ENCODE measurements at regions of chr11 and their contacts with region 1.

Region 1: GRCh38 chr11:18395735-18396504 is 1.6 kb downstream of the LDHA start:
- DNase-seq: peak; percentile 97
- ATAC-seq: peak; percentile 86
- H3K4me3 Mint-ChIP-seq: peak overlapping the region; percentile 98
- H3K27ac Mint-ChIP-seq: peak overlapping the region; percentile 96
- H3K4me1 Mint-ChIP-seq: peaks cover 25% of the 10 kb centered on the region
- H3K27me3 Mint-ChIP-seq: peaks cover 9% of the 10 kb centered on the region
- CTCF ChIP-seq: no peak

Region 2: GRCh38 chr11:18408558-18409242 is 12.8 kb after region 1 on chr11:
- CTCF ChIA-PET with region 1: interaction called, 22 read pairs
- POLR2A ChIA-PET with region 1: interaction called, 8 read pairs
- DNase-seq: no peak
- ATAC-seq: no peak
- H3K4me3 Mint-ChIP-seq: no peak overlapping the region
- H3K27ac Mint-ChIP-seq: peak overlapping the region; percentile 57; the same call in 1 of the 2 replicates
- H3K4me1 Mint-ChIP-seq: peaks cover 8% of the 10 kb centered on the region
- H3K27me3 Mint-ChIP-seq: peaks cover 26% of the 10 kb centered on the region
- CTCF ChIP-seq: no peak

Region 3: GRCh38 chr11:18526521-18527296 is 130.8 kb after region 1 on chr11 and contains the start of gene TSG101:
- CTCF ChIA-PET with region 1: interaction called, 3 read pairs
- POLR2A ChIA-PET with region 1: interaction called, 14 read pairs
- DNase-seq: peak; percentile 93
- ATAC-seq: peak; percentile 94
- H3K4me3 Mint-ChIP-seq: peak within 1 kb of the TSS; percentile 100
- H3K27ac Mint-ChIP-seq: peak within 1 kb of the TSS; percentile 100
- H3K4me1 Mint-ChIP-seq: peaks cover 6% of the 10 kb centered on the region
- H3K27me3 Mint-ChIP-seq: no peaks in the 10 kb centered on the region; the same call in 1 of the 2 replicates
- CTCF ChIP-seq: no peak
- total RNA-seq, gene TSG101: 41.7 to 42.6 TPM (median 42.3 TPM) in 3 replicates

Measured in WTC11 (cell line).